Mammary epithelial cell (primary cell): ENCODE measurements at regions of chr6 and their contacts with region 1.

Region 1: GRCh38 chr6:123802697-123803496 is 768 bp upstream of the NKAIN2 start:
- DNase-seq: peak; percentile 75
- H3K4me3 ChIP-seq: peak overlapping the region; percentile 40 to 51 (median 46)
- H3K27ac ChIP-seq: no peak overlapping the region
- H3K4me1 ChIP-seq: peaks cover 11% of the 10 kb centered on the region
- H3K27me3 ChIP-seq: peaks cover 24% of the 10 kb centered on the region
- CTCF ChIP-seq: peak; percentile 77 to 96

Region 2: GRCh38 chr6:123575188-123575587 is 227.7 kb before region 1 on chr6:
- CTCF ChIA-PET with region 1: no interaction called
- dilution Hi-C with region 1: no loop called
- in situ Hi-C with region 1: no loop called
- intact Hi-C with region 1: no loop called
- DNase-seq: no peak
- H3K4me3 ChIP-seq: no peak overlapping the region
- H3K27ac ChIP-seq: no peak overlapping the region
- H3K4me1 ChIP-seq: no peaks in the 10 kb centered on the region
- H3K27me3 ChIP-seq: no peaks in the 10 kb centered on the region
- CTCF ChIP-seq: no peak

Region 3: DNA sequence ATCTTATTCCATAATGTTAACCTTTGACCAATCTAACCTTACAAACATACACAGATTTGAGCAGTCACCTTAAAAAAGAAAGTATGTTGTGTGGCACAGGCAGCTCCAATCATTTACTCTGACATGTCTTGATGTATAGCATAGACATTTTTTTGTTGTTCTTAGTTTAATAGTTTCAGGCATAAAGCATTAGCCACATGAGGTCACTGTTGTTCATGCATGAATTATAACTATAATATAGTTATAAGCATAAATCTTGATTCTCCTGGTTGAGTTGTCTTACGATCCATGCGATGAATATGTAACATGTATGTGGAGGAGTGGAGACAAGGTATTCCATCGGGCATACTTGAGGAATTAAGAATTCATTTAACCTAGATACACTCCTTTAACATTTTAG is 25.3 kb before region 1 on chr6:
- CTCF ChIA-PET with region 1: no interaction called
- dilution Hi-C with region 1: no loop called
- in situ Hi-C with region 1: no loop called
- intact Hi-C with region 1: loop called (anchors 1 kb)
- DNase-seq: peak; percentile 6
- H3K4me3 ChIP-seq: no peak overlapping the region
- H3K27ac ChIP-seq: no peak overlapping the region
- H3K4me1 ChIP-seq: no peaks in the 10 kb centered on the region
- H3K27me3 ChIP-seq: peaks cover 4% of the 10 kb centered on the region
- CTCF ChIP-seq: peak; percentile 28 to 43

Region 4: DNA sequence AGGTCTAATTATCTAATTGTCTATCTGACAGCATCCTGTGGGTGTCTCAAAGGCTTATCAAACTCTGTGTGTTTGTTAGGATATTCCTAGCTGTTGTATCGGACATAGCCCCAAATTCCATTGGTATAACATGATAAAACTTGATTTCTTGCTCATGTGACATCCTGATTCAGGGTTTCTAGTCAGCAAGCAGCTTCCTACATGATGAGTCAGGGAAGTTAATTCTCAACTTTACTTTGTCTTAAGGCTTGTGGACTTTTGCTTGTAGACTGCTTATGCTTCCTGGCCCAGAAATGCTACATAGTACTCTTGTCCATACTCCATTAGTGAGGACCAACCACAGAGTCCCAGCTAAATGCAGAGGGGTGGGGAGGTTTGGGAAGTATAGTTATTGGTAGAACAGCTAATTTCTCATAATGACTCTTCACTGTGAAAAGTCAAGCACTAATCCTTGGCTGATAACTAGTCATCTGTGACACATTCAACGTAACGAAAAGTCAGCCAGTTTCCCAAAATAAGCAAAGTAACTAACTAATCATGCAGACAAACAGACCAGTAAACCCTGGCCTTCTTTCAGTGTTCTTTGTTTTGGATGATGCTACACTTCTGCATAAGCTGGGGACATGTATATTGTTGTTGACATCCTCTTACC is 26.5 kb after region 1 on chr6:
- CTCF ChIA-PET with region 1: no interaction called
- dilution Hi-C with region 1: no loop called
- in situ Hi-C with region 1: no loop called
- intact Hi-C with region 1: loop called (anchors 2 kb)
- DNase-seq: peak; percentile 89
- H3K4me3 ChIP-seq: no peak overlapping the region
- H3K27ac ChIP-seq: peak overlapping the region; percentile 68
- H3K4me1 ChIP-seq: peaks cover 18% of the 10 kb centered on the region
- H3K27me3 ChIP-seq: no peaks in the 10 kb centered on the region
- CTCF ChIP-seq: no peak

Region 5: DNA sequence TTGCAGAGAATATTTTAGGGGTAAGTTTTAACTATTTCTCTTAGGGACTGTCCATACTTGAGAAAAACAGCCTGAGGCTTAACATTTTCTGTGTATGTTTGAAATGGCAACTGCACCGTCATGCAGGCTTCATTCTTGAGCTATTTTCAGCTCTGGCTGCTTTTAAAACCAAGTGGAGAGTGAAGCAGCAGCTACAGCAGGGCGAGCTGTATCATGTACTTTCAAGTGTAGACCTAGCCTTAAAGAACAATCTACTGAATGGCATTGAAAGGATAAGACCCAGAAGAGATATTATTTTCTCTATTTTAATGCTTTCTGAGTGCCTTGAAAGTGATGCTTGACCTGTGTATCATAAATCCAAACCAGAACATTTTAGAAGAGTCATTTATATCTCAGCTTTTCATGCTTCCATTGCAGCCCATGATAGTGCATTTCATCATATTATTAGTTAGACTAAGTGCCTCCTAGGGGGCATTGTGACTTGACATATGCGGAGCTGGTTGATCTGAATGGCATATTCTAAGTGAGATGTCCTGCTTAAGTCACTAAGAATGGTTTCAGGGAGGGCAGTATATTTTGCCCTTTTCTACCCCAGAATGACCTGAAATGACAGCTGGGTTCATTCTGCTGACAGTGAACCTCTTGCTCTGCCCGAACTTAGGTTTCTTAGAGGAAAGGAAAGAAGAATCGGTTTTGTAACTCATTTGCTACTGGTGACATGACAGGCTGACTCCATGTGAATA is 86.0 kb after region 1 on chr6:
- CTCF ChIA-PET with region 1: no interaction called
- dilution Hi-C with region 1: no loop called
- in situ Hi-C with region 1: no loop called
- intact Hi-C with region 1: loop called (anchors 10 kb)
- DNase-seq: no peak
- H3K4me3 ChIP-seq: no peak overlapping the region
- H3K27ac ChIP-seq: no peak overlapping the region
- H3K4me1 ChIP-seq: no peaks in the 10 kb centered on the region
- H3K27me3 ChIP-seq: peaks cover 4% of the 10 kb centered on the region
- CTCF ChIP-seq: no peak

Region 6: GRCh38 chr6:123965894-123966293 is 163.0 kb after region 1 on chr6:
- CTCF ChIA-PET with region 1: interaction called, 10 read pairs
- dilution Hi-C with region 1: no loop called
- in situ Hi-C with region 1: loop called (anchors 5 kb)
- intact Hi-C with region 1: loop called (anchors 1 kb)
- DNase-seq: peak; percentile 38
- H3K4me3 ChIP-seq: no peak overlapping the region
- H3K27ac ChIP-seq: no peak overlapping the region
- H3K4me1 ChIP-seq: no peaks in the 10 kb centered on the region
- H3K27me3 ChIP-seq: no peaks in the 10 kb centered on the region
- CTCF ChIP-seq: peak; percentile 76 to 82

Region 7: DNA sequence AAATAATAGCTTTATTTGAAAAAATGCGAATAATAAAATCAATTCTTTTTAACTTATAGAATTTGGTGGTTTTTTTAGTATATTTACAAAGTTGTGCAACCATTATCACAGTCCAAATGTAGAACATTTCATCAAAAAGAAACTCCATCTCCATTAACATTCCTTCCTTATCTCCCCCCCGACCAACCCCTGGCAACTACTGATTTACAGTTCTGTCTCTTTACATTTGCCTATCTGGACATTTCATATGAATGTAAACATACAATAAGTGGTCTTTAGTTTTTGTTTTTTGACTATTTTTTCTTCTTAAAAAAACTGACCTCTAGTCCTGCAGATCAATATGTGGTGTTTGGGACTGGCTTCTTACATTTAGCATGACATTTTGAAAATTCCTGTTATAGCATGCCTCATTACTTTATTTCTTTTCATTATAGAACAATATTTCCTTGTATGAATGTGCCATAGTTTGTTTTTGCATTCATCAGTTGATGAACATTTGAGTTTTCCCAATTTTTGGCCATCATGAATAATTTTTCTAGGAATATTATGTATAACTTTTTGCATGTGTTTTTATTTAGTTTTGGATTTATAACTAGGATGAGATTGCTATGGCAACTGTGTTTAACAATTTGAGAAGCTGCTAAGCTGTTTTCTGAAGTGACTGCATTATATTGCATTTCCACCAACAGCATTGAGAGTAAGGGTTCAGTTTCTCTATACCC is 345.5 kb after region 1 on chr6:
- CTCF ChIA-PET with region 1: no interaction called
- dilution Hi-C with region 1: no loop called
- in situ Hi-C with region 1: no loop called
- intact Hi-C with region 1: no loop called
- DNase-seq: no peak
- H3K4me3 ChIP-seq: no peak overlapping the region
- H3K27ac ChIP-seq: no peak overlapping the region
- H3K4me1 ChIP-seq: no peaks in the 10 kb centered on the region
- H3K27me3 ChIP-seq: no peaks in the 10 kb centered on the region
- CTCF ChIP-seq: no peak

Region 8: DNA sequence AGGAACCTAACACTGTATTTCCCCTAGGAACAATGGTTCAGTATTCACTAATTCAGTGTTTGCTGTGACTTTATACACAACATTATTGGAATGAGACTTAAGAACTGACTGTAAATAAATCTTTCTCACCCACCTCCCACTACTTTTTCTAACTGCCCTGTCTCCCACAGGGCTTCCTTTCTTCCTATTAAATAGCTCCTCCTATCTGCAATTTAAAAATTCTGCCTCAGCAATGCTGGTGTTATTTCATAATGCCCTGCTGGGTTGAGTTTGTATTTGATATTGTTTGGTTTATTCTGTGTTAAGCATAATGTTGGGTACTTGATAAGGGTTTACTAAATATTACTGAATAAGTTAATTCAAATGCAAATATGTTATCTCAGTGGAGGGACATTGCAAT is 586.2 kb after region 1 on chr6:
- CTCF ChIA-PET with region 1: no interaction called
- dilution Hi-C with region 1: no loop called
- in situ Hi-C with region 1: no loop called
- intact Hi-C with region 1: loop called (anchors 1 kb)
- DNase-seq: no peak
- H3K4me3 ChIP-seq: no peak overlapping the region
- H3K27ac ChIP-seq: no peak overlapping the region
- H3K4me1 ChIP-seq: no peaks in the 10 kb centered on the region
- H3K27me3 ChIP-seq: peaks cover 2% of the 10 kb centered on the region
- CTCF ChIP-seq: peak; percentile 8 to 41

Region 9: DNA sequence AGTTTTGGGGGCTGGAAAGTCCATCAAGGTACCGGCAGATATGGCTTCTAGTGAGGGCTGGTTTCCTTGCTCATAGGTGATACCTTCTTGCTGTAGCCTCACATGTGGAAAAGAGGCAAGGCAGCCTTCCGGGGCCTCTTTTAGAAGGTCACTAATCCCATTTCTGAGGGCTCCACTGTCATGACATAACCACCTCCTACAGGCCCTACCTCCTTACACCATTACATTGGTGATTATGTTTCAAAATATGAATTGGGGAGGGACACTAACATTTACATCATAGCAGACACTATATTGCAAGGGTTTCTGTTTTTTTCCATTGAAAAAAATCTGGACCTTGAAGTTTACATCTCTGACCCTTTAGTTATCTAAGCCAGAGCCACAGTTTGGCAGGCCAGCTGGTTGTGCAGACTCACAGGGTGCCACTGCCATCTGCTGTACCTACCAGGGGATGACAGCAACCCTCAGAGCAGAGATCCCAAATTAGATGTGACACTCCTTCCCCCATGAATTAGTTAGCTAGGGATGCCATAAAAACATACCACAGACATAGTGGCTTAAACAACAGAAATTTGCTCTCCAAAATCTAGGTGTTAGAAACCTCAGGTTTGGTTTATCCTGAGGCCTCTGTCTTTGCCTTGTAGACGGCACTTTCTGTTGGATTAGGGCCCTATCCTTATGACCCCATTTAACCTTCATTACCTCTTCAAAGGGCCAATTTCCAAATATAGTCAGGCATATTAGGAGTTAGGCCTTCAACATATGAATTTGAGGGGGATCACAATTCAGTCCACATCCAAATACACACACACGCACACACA is 993.0 kb after region 1 on chr6:
- CTCF ChIA-PET with region 1: interaction called, 8 read pairs
- dilution Hi-C with region 1: loop called (anchors 25 kb)
- in situ Hi-C with region 1: loop called in 1 of 2 experiments (anchors 10 kb)
- intact Hi-C with region 1: loop called (anchors 1 kb)
- DNase-seq: no peak
- H3K4me3 ChIP-seq: no peak overlapping the region
- H3K27ac ChIP-seq: no peak overlapping the region
- H3K4me1 ChIP-seq: peaks cover 7% of the 10 kb centered on the region
- H3K27me3 ChIP-seq: peaks cover 2% of the 10 kb centered on the region
- CTCF ChIP-seq: peak; percentile 58 to 75